ENCODE measurements at regions of chr2 and their contacts with region 1.

Region 1: GRCh38 chr2:32772638-32773447 is 145.0 kb downstream of the TTC27 start:
- DNase-seq: peak; percentile 5 to 49
- H3K4me3 ChIP-seq: no peak overlapping the region
- H3K27ac ChIP-seq: no peak overlapping the region
- H3K4me1 ChIP-seq: no peaks in the 10 kb centered on the region
- H3K27me3 ChIP-seq: no peaks in the 10 kb centered on the region
- CTCF ChIP-seq: peak; percentile 94

Region 2: GRCh38 chr2:31675485-31675901 is 1097.3 kb before region 1 on chr2:
- CTCF ChIA-PET with region 1: no interaction called
- POLR2A ChIA-PET with region 1: no interaction called
- intact Hi-C with region 1: no loop called
- DNase-seq: peak in 1 of 2 experiments; percentile 6
- H3K4me3 ChIP-seq: no peak overlapping the region
- H3K27ac ChIP-seq: no peak overlapping the region
- H3K4me1 ChIP-seq: no peaks in the 10 kb centered on the region
- H3K27me3 ChIP-seq: no peaks in the 10 kb centered on the region
- CTCF ChIP-seq: 0 out of 2 replicates have a peak, but pooled peaks have one; percentile 26

Region 3: GRCh38 chr2:32946314-32947075 is 173.7 kb after region 1 on chr2 and contains the start of gene LTBP1:
- CTCF ChIA-PET with region 1: no interaction called
- POLR2A ChIA-PET with region 1: no interaction called
- intact Hi-C with region 1: loop called (anchors 1 kb)
- DNase-seq: peak; percentile 62 to 68
- H3K4me3 ChIP-seq: peak within 1 kb of the TSS; percentile 77
- H3K27ac ChIP-seq: no peak within 1 kb of the TSS
- H3K4me1 ChIP-seq: peaks cover 10% of the 10 kb centered on the region
- H3K27me3 ChIP-seq: no peaks in the 10 kb centered on the region
- CTCF ChIP-seq: peak; percentile 88
- total RNA-seq, gene LTBP1: 10.3 and 10.4 TPM in 2 replicates

Region 4: GRCh38 chr2:33033606-33034081 is 260.8 kb after region 1 on chr2:
- CTCF ChIA-PET with region 1: no interaction called
- POLR2A ChIA-PET with region 1: interaction called, 3 read pairs
- intact Hi-C with region 1: loop called (anchors 1 kb)
- DNase-seq: no peak
- H3K4me3 ChIP-seq: no peak overlapping the region
- H3K27ac ChIP-seq: no peak overlapping the region
- H3K4me1 ChIP-seq: no peaks in the 10 kb centered on the region
- H3K27me3 ChIP-seq: no peaks in the 10 kb centered on the region
- CTCF ChIP-seq: peak; percentile 69

Region 5: GRCh38 chr2:33275689-33276444 is 503.0 kb after region 1 on chr2:
- CTCF ChIA-PET with region 1: no interaction called
- POLR2A ChIA-PET with region 1: no interaction called
- intact Hi-C with region 1: loop called (anchors 10 kb)
- DNase-seq: peak; percentile 49 to 76
- H3K4me3 ChIP-seq: no peak overlapping the region
- H3K27ac ChIP-seq: peak overlapping the region; percentile 64
- H3K4me1 ChIP-seq: peaks cover 18% of the 10 kb centered on the region
- H3K27me3 ChIP-seq: no peaks in the 10 kb centered on the region
- CTCF ChIP-seq: no peak

Region 6: GRCh38 chr2:33395655-33396249 is 622.9 kb after region 1 on chr2:
- CTCF ChIA-PET with region 1: no interaction called
- POLR2A ChIA-PET with region 1: no interaction called
- intact Hi-C with region 1: loop called (anchors 1 kb)
- DNase-seq: peak in 1 of 2 experiments; percentile 53
- H3K4me3 ChIP-seq: no peak overlapping the region
- H3K27ac ChIP-seq: no peak overlapping the region
- H3K4me1 ChIP-seq: no peaks in the 10 kb centered on the region
- H3K27me3 ChIP-seq: no peaks in the 10 kb centered on the region
- CTCF ChIP-seq: peak; percentile 82

Region 7: DNA sequence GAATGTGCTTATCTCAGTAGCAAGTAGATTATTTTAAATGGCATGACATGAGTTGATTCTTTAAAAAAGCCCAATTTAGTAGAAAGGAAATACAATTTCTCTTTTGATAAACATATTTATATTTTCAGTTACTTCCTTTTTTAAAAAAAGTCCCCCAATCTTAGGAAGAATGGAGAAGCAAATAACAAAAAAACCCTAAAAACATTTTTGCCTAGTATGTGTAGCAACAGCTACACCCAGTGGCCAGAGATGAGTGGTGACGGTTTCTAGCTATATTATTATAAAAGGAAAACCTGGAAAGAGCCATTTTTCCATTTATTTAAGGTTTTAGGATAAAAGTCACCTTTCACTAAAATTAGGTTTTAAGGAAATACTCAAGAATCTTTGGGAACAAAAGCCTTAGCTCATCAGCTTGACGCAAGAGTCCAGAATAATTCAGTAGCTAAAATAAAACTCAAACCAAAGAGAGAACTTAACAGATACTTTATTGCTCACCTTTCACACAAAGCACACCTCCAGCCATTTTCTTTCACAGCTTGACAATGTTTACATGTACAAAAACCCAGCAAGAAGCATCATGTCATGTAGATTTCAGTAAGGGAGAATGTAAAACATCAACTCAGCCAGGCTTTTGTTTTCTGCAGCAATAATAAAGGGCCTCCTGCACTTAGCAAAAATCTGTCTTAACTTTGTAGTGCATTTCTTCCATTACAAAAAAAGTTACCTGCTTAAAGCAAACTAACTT is 810.5 kb after region 1 on chr2:
- CTCF ChIA-PET with region 1: no interaction called
- POLR2A ChIA-PET with region 1: no interaction called
- intact Hi-C with region 1: loop called (anchors 1 kb)
- DNase-seq: peak in 1 of 2 experiments; percentile 34
- H3K4me3 ChIP-seq: no peak overlapping the region
- H3K27ac ChIP-seq: no peak overlapping the region
- H3K4me1 ChIP-seq: no peaks in the 10 kb centered on the region
- H3K27me3 ChIP-seq: no peaks in the 10 kb centered on the region
- CTCF ChIP-seq: peak; percentile 91

Measured in PC-9 (cell line).